Activated CD4-positive, alpha-beta T cell treated with anti-CD3 and anti-CD28 coated beads, Interleukin-2, amount 10 ng/mL, durations not matched to agents 7 days and 5 days (primary cell): ENCODE measurements at regions of chr5 and their contacts with region 1.

Region 1: GRCh38 chr5:172188033-172188892 is at the start of gene STK10:
- DNase-seq: peak; percentile 90
- H3K4me3 Mint-ChIP-seq: peak within 1 kb of the TSS; percentile 99
- H3K27ac Mint-ChIP-seq: peak within 1 kb of the TSS; percentile 96
- H3K4me1 Mint-ChIP-seq: peaks cover 28% of the 10 kb centered on the region
- H3K27me3 Mint-ChIP-seq: no peaks in the 10 kb centered on the region
- total RNA-seq, gene STK10: 299 to 312 TPM

Region 2: DNA sequence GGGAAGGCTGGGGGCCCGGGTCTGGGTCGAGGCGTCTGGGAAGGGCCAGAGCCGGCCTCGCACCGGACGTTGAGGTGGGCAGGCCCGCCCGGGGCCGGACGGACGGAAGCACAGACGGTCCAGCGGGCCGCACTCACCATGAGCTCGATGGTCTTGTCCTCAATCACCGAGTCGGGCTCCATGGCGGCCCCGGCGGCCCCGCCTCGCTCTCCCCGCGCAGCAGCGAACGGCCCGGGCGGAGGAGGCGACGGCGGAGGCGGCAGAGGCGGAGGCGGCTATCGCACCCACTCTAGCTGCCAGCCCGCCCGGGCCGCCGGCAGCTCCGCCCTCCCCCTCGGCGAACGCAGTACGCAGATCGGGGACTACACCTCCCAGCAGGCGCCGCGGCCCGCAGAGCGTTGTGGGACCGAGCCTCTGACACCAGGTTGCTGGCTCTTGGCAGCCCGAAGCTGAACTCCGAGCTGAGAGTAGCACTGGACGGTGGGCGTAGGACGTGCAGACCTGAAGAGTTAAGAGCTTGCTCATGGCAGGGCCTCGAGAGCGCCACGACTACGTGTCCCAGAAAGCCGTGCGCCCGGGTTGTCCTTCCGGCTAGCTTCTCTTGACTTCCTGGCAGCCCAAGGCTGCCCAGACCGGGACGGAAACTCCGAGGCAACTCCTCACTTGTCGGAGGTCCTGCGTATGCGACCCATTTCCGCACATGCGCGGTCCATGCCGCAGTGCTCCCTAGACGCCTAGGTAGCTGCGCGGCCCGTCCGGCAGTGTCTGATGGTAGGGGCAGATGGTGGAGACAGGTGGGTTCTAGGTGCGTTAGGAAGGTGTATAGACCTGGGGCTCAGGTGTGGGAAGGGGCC is 181.7 kb before region 1 on chr5 and contains the start of gene FBXW11:
- CTCF ChIA-PET with region 1: interaction called, 12 read pairs
- POLR2A ChIA-PET with region 1: no interaction called
- DNase-seq: peak; percentile 97
- H3K4me3 Mint-ChIP-seq: peak within 1 kb of the TSS; percentile 82
- H3K27ac Mint-ChIP-seq: peak within 1 kb of the TSS; percentile 96
- H3K4me1 Mint-ChIP-seq: peaks cover 53% of the 10 kb centered on the region
- H3K27me3 Mint-ChIP-seq: no peaks in the 10 kb centered on the region
- total RNA-seq, gene FBXW11: 27.3 to 27.5 TPM

Region 3: DNA sequence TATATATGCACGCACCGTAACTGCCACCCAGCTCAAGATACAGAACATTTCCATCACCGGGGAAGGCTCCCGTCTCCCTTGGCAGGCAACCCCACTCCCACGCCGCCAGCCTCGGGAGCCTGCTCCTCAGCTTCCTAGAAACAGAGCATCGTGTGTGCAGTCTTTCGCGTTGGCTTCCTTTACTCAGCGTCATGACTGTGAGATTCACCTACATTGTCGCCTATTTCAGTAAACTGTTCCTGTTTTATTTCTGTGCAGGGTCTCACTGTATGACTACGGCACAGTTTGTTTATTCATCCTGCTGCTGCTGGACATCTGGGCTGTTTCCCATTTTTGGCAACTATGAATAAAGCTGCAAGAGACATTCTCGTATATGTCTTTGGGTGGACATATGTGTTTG is 90.9 kb before region 1 on chr5:
- CTCF ChIA-PET with region 1: interaction called, 34 read pairs
- POLR2A ChIA-PET with region 1: interaction called, 3 read pairs
- DNase-seq: no peak
- H3K4me3 Mint-ChIP-seq: no peak overlapping the region
- H3K27ac Mint-ChIP-seq: no peak overlapping the region
- H3K4me1 Mint-ChIP-seq: peaks cover 18% of the 10 kb centered on the region
- H3K27me3 Mint-ChIP-seq: no peaks in the 10 kb centered on the region

Region 4: DNA sequence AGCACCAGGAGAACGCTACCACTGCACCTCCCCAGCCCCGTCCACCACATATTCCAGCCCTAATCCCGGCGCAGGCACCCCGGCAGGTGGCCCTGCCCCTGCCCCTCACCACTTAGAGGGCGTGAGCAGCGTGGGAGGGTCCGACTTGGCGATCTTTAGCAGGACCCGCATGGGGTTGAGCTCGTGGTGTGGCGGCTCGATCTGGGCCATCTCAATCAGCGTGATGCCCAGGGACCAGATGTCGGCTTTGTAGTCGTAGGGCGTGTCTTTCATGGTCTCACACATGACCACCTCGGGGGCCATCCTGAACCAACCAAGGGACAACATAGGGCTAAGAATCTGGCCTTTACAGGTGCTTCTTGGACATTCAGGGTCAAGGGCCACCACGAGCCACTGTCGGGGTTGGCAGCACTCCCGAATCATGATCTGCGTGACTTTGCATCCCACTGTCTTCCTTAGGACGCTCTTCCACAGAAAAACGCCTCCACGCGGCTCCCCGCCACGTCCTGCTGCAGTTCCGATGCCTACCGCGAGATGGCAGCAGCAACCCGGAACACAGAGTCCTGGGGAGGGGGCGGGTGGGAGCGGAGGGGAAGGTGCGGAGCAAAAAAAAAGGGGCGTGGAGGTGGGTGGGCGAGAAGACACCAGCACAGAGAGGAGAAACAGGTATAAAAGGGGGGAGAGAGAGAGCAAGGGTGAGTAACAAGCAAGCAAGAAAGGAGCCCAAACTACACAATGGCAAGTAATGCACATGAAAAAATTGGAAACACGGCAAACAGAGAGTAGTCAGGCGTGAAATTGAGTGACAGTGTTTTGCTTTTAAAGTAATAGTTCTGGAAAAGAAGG is 81.5 kb before region 1 on chr5:
- CTCF ChIA-PET with region 1: interaction called, 25 read pairs
- POLR2A ChIA-PET with region 1: interaction called, 9 read pairs
- DNase-seq: peak; percentile 67
- H3K4me3 Mint-ChIP-seq: no peak overlapping the region
- H3K27ac Mint-ChIP-seq: peak overlapping the region; percentile 57
- H3K4me1 Mint-ChIP-seq: peaks cover 65% of the 10 kb centered on the region
- H3K27me3 Mint-ChIP-seq: no peaks in the 10 kb centered on the region

Region 5: GRCh38 chr5:172129256-172129910 is 58.9 kb before region 1 on chr5:
- CTCF ChIA-PET with region 1: interaction called, 10 read pairs
- POLR2A ChIA-PET with region 1: no interaction called
- DNase-seq: no peak
- H3K4me3 Mint-ChIP-seq: no peak overlapping the region
- H3K27ac Mint-ChIP-seq: peak overlapping the region; percentile 16
- H3K4me1 Mint-ChIP-seq: peaks cover 58% of the 10 kb centered on the region
- H3K27me3 Mint-ChIP-seq: no peaks in the 10 kb centered on the region

Region 6: DNA sequence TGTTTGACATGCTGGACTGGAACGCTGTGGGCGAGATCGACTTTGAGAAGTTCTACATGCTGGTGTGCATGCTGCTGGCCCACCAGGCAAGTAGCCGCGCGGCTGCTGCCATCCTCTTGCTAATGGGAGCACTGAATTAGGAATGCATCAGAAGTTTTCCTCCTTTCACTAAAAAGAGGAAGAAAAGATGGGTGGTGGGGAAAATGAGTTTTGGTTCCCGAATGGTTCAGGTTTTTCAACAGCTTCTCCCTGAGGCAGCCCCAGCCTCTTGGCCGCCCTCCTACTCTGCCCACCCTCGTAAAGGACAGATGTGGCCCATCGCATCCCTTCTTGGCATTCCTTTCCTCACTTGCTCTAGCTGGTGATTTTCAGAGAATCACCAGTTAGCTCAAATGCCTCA is 11.2 kb after region 1 on chr5:
- CTCF ChIA-PET with region 1: interaction called, 18 read pairs
- POLR2A ChIA-PET with region 1: no interaction called
- DNase-seq: no peak
- H3K4me3 Mint-ChIP-seq: no peak overlapping the region
- H3K27ac Mint-ChIP-seq: no peak overlapping the region
- H3K4me1 Mint-ChIP-seq: no peaks in the 10 kb centered on the region
- H3K27me3 Mint-ChIP-seq: peaks cover 11% of the 10 kb centered on the region

Region 7: DNA sequence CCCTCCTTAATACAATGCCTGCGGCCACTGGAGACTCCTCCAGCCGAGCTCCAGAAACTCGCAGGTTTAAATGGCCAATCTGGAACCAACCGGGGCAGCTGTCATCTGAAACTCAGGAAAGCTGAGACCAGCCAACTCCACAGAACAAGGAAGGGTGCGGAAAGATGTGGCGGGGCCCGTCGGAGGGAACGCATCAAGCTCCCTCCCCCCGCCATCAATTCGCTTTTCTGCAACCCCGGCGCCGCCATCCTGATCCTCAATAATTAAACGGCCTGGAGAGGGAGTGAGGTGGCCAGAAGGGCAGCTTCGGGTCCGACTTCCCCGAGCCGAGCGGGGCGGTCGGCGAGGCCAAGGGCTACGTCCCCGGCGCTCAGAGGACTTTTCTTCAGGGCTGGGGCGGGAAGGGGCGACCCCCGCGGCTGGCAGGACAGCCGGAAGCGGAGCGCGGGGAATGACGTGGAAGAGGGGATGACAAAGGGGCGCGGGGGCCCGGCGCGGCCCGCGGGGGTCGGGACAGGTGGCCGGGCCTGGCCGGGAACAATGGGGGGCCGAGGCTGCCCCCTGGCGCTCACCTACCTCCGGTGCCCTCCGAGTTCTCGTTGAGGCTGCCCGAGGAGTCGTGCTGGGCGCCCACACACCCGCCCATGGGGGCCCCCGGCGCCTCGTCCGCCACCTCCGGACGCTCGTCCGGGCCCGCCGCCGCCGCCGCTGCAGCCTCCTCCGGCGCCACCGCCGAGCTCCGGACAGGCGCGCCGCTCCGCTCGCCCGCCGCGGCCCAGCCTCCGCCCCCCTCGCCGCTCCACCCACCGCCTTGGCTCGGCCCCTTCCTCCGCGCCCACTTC is 95.0 kb after region 1 on chr5 and contains the start of gene UBTD2:
- CTCF ChIA-PET with region 1: interaction called, 11 read pairs
- POLR2A ChIA-PET with region 1: interaction called, 3 read pairs
- DNase-seq: peak; percentile 75
- H3K4me3 Mint-ChIP-seq: peak within 1 kb of the TSS; percentile 83
- H3K27ac Mint-ChIP-seq: peak within 1 kb of the TSS; percentile 68
- H3K4me1 Mint-ChIP-seq: peaks cover 25% of the 10 kb centered on the region
- H3K27me3 Mint-ChIP-seq: peaks cover 10% of the 10 kb centered on the region
- total RNA-seq, gene UBTD2: 10.3 to 11.5 TPM

Region 8: DNA sequence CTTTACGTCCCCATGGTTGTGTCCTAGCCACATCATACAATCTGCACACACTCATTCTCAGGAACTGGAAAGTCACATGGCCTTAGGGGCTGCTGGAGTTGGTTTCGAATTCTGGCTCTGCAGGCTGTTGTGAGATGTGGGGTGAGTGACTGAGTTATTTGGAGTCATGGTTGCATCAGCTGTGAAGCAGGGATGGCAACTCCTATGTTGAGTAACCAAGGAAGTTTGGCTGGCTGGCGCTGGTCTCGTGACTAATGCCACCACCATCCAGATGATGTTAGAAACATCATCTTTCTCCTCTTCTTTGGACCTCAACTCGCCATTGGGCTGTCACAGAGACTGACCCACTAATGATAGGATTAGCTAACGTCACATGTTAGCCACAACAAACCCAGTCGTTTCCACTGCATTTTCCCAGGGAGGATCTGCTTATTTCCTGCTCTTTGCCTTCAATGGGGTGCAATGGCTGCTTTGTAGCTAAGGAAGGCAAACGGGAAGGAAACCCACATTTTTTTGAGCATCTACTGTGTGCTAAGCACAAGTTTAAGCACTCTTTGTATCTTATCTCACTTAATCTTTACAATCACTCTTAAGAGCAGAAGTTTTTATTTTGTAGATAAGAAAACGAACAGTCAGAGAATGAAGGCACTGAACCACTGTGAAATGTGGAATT is 173.4 kb after region 1 on chr5:
- CTCF ChIA-PET with region 1: no interaction called
- POLR2A ChIA-PET with region 1: no interaction called
- DNase-seq: peak; percentile 14
- H3K4me3 Mint-ChIP-seq: no peak overlapping the region
- H3K27ac Mint-ChIP-seq: peak overlapping the region; percentile 54
- H3K4me1 Mint-ChIP-seq: peaks cover 16% of the 10 kb centered on the region
- H3K27me3 Mint-ChIP-seq: no peaks in the 10 kb centered on the region